Cardiac septum (tissue), 1 donor: ENCODE measurements at regions of chr1 and their contacts with region 1.

Region 1: DNA sequence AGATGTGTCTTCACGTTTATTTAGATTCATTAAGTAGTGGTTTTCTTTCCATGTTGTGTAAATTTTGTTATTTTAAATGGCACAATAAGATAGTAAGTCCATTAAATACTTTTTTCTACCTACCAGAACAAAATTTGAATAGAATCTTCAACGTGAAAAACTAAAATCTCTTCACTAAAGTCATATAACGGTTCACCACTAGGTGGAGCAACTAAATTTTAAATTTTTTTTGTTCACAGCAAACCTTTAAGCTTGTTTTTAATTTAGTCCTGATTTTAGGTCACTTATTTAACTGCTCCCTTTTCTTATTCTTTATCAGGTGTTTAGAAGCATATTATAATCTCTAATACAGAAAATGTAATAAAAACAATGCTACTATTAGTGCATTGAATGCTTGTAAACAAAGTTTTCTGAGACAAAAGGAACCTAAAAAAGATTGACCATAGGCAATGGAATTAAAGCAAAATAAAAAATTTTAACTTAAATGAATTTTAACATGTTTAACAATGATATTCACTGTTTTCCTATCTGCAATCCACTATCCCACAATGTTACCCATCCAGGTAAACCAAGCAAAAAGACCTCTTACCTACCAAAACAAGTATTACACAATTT is 28.3 kb upstream of the PKN2 start:
- DNase-seq: no peak

Region 2: DNA sequence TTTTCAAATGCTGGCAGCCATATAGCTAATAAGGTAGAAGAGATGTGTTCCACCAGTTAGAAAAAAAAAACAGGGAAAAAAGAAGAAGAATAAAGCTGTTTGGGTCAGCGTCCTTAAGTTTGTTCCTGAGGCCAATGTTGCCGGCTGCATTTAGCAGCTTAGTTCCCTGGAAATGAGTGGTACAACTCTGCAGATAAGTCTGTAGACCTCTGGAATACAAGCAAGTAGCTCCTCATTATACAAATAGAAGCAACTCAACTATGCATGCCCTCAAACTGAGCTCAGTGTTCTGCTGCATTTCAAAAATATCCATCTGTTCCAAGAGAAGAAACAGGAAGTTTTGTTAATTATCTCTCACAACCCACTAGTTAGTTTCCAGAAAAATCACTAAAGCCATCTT is 152.9 kb before region 1 on chr1:
- intact Hi-C with region 1: no loop called
- DNase-seq: no peak

Region 3: DNA sequence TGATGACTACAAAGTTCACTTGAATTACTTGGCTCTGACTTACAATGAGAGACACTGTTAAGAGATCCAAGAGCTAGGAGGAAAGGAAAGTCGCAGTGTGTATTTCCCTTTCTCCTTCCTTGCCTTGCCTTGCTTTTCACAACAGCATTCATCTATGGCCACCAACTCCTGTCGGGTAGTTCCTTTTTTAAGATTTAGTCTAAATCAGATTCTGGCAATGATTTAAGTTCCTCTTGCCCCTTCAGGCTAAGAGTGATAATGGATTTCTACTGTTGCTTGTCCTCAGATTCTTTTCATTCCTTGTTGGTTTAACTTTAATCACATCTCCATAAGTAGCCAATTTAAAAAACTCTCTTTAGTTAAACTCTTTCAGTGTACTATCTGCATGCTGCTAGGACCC is 143.7 kb after region 1 on chr1:
- intact Hi-C with region 1: loop called (anchors 10 kb)
- DNase-seq: no peak

Region 4: DNA sequence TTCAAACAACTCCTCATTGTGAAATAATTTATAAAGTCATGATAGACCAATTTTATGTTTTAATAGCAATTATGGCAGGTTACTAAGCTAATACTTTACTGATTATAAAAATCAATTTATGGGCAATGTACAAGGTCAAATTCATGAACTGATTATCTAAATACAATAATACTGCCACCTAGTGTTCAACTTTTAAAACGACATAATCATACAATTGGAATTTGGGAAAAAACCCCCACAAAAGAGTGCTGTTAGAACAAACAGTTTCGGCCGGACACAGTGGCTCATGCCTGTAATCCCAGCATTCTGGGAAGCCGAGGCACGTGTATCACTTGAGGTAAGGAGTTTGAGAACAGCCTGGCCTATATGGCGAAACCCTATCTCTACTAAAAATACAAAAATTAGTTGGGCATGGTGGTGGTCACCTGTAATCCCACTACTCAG is 221.6 kb after region 1 on chr1:
- intact Hi-C with region 1: loop called (anchors 5 kb)
- DNase-seq: no peak